CD14-positive monocyte (primary cell): ENCODE measurements at regions of chr22 and their contacts with region 1.

Region 1: DNA sequence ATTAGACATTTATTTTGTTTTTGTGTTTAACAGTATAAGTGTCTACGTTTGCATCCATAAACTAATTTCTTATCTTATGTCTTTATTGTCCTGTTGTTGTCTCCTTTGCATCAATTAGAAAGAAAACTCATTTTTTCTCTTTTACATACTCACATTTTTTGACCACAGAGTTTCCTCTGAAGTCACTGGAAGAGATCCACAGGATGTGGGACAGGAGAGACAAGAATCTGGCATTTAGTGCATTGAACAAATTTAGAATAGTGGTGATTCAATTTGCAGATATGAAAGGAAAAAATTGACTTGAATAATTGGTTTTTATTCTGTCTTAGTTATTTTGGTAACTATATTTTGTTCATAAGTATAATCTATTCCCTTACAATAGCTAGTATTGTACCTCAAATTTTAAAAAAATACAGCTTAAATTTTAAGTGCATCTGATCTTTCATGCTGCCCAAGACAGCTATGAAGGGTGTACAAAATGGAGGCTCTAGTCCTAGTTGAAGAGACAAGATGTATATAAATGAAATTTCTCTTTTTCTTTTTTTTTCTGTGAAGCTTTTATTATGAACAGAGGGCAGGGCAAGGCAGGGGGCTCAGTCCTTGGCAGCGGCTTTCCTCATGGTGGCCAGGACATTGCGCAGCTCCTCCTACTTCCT is 24.4 kb downstream of the HORMAD2 start:
- DNase-seq: no peak
- H3K4me3 ChIP-seq: no peak overlapping the region
- H3K4me3 Mint-ChIP-seq: peak overlapping the region in 1 of 2 donors; percentile 11
- H3K27ac ChIP-seq: no peak overlapping the region
- H3K27ac Mint-ChIP-seq: no peak overlapping the region
- H3K4me1 ChIP-seq: no peaks in the 10 kb centered on the region
- H3K4me1 Mint-ChIP-seq: peaks cover 6% of the 10 kb centered on the region
- H3K27me3 ChIP-seq: no peaks in the 10 kb centered on the region
- H3K27me3 Mint-ChIP-seq: peaks cover 0 to 3% (median 2%) of the 10 kb centered on the region in 3 donors
- CTCF ChIP-seq: no peak

Region 2: GRCh38 chr22:30253205-30253852 is 148.7 kb after region 1 on chr22:
- intact Hi-C with region 1: loop called (anchors 1 to 2 kb)
- DNase-seq: no peak
- H3K4me3 ChIP-seq: no peak overlapping the region
- H3K4me3 Mint-ChIP-seq: no peak overlapping the region
- H3K27ac ChIP-seq: no peak overlapping the region
- H3K27ac Mint-ChIP-seq: peak overlapping the region in 5 of 7 donors; percentile 4 to 79 (median 51)
- H3K4me1 ChIP-seq: peaks cover 16 to 28% of the 10 kb centered on the region in 2 donors
- H3K4me1 Mint-ChIP-seq: peaks cover 33% of the 10 kb centered on the region
- H3K27me3 ChIP-seq: peaks cover 0 to 5% of the 10 kb centered on the region in 2 donors
- H3K27me3 Mint-ChIP-seq: peaks cover 9 to 18% (median 12%) of the 10 kb centered on the region in 3 donors
- CTCF ChIP-seq: no peak

Region 3: GRCh38 chr22:30474683-30475424 is 370.2 kb after region 1 on chr22:
- intact Hi-C with region 1: loop called in 1 of 2 experiments (anchors 10 kb)
- DNase-seq: no peak
- H3K4me3 ChIP-seq: no peak overlapping the region
- H3K4me3 Mint-ChIP-seq: no peak overlapping the region
- H3K27ac ChIP-seq: no peak overlapping the region
- H3K27ac Mint-ChIP-seq: no peak overlapping the region
- H3K4me1 ChIP-seq: no peaks in the 10 kb centered on the region
- H3K4me1 Mint-ChIP-seq: no peaks in the 10 kb centered on the region
- H3K27me3 ChIP-seq: no peaks in the 10 kb centered on the region
- H3K27me3 Mint-ChIP-seq: peaks cover 10 to 28% (median 13%) of the 10 kb centered on the region in 3 donors
- CTCF ChIP-seq: no peak